Ascending aorta (tissue), 2 donors: ENCODE measurements at regions of chr16 and their contacts with region 1.

Region 1: DNA sequence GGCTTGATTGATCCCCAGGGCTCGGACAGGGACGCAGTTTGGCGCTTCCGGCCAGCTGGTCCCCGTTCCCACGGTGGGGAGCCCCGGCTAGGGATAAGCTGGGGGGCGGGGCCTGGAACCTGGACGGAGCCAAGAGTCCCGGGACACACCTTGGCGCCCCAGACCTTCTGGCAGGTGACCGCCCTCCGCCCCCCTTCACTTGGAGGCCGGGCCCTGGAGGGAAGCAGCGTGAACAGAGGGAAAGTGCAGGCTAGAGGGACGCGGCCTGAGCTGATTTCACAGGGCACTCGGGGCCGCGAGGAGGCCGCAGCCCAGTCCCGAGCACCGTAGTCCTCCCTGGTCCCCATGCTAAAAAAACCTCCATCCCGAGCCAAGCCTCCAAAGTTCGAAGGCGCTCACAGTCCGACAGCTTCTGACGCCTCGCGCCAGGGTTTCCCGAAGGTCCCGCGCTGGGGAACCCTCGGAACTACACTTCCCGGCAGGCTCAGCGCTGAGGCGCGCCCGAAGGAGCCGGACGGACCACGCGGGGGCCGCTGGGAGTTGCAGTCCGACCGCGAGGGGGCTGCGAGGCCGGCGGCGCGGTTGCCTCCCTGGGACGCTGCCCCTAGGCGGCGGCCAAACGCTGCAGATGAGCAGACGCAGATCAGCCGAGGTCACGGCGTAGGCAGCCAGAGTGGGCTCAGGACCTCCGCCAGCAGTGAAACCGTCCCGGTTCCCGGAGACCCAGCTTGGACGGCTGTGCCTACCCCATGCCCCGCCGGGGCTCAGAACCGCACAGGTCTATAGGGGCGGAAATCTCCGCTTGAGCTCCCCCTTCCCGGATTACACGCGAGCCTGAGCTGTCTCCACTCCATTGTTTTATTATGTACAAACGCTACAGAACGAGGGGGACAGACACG is at the start of gene TBX6:
- DNase-seq: peak; percentile 65 to 95
- H3K4me3 ChIP-seq: peak within 1 kb of the TSS; percentile 53 to 72
- H3K27ac ChIP-seq: peak within 1 kb of the TSS; percentile 74 to 84
- H3K4me1 ChIP-seq: peaks cover 22 to 27% of the 10 kb centered on the region in 2 donors
- H3K27me3 ChIP-seq: no peaks in the 10 kb centered on the region
- CTCF ChIP-seq: peak; percentile 75 to 96 (median 81)
- total RNA-seq, gene TBX6: 0.75 TPM

Region 2: GRCh38 chr16:30052671-30053372 is 38.9 kb before region 1 on chr16:
- intact Hi-C with region 1: loop called (anchors 5 kb)
- DNase-seq: peak in 1 of 2 donors; percentile 94
- H3K4me3 ChIP-seq: peak overlapping the region; percentile 79 to 88
- H3K27ac ChIP-seq: peak overlapping the region; percentile 41 to 59
- H3K4me1 ChIP-seq: peaks cover 0 to 12% of the 10 kb centered on the region in 2 donors
- H3K27me3 ChIP-seq: no peaks in the 10 kb centered on the region
- CTCF ChIP-seq: no peak

Region 3: DNA sequence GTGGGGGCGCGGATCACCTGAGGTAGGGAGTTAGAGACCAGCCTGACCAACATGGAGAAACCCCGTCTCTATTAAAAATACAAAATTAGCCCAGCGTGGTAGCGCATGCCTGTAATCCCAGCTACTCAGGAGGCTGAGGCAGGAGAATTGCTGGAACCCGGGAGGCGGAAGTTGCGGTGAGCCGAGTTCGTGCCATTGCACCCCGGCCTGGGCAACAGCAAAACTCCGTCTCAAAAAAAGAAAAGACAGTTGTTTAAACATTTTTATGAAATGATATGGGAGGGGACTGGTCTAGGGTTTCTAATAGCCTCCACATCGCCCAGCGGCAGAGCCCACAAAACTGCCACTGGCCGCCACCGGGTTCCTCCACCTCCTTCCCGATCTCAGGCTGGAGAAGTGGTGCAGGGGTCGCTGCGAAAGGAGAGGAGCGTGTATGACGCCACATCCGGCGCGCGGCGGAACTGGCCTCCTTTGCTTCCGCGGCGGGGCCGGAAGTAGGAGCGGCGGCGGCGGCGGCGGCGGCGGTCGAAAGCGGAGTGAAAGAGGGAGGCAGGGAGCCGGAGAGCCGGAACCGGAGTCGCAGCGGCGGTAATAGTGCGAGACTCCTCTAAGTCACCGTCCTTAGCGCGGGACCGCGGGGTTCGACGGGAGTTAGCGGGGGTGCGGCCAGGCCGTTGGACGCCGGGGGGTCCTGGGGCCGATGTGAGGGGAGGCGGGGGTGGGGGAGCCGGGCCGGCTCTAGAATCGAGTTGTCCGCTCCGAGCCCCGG is 16.0 kb before region 1 on chr16 and contains the start of gene PPP4C:
- intact Hi-C with region 1: loop called (anchors 2 kb)
- DNase-seq: peak; percentile 46 to 95
- H3K4me3 ChIP-seq: peak within 1 kb of the TSS; percentile 69 to 96
- H3K27ac ChIP-seq: peak within 1 kb of the TSS; percentile 92 to 93
- H3K4me1 ChIP-seq: peaks cover 6 to 19% of the 10 kb centered on the region in 2 donors
- H3K27me3 ChIP-seq: no peaks in the 10 kb centered on the region
- CTCF ChIP-seq: peak in 1 of 3 experiments; percentile 17
- total RNA-seq, gene PPP4C: 50.7 TPM

Region 4: GRCh38 chr16:30122604-30123160 is 31.0 kb after region 1 on chr16:
- intact Hi-C with region 1: loop called (anchors 1 kb)
- DNase-seq: peak in 1 of 2 donors; percentile 72
- H3K4me3 ChIP-seq: peak overlapping the region; percentile 88 to 99
- H3K27ac ChIP-seq: peak overlapping the region; percentile 86 to 92
- H3K4me1 ChIP-seq: peaks cover 0 to 9% of the 10 kb centered on the region in 2 donors
- H3K27me3 ChIP-seq: no peaks in the 10 kb centered on the region
- CTCF ChIP-seq: no peak

Region 5: GRCh38 chr16:30183233-30184095 is 91.7 kb after region 1 on chr16 and contains the start of gene CORO1A:
- intact Hi-C with region 1: loop called (anchors 5 kb)
- DNase-seq: peak in 1 of 2 donors; percentile 88
- H3K4me3 ChIP-seq: peak within 1 kb of the TSS; percentile 59 to 73
- H3K27ac ChIP-seq: peak within 1 kb of the TSS; percentile 68 to 72
- H3K4me1 ChIP-seq: peaks cover 3 to 9% of the 10 kb centered on the region in 2 donors
- H3K27me3 ChIP-seq: no peaks in the 10 kb centered on the region
- CTCF ChIP-seq: no peak
- total RNA-seq, gene CORO1A: 69.4 TPM

Region 6: DNA sequence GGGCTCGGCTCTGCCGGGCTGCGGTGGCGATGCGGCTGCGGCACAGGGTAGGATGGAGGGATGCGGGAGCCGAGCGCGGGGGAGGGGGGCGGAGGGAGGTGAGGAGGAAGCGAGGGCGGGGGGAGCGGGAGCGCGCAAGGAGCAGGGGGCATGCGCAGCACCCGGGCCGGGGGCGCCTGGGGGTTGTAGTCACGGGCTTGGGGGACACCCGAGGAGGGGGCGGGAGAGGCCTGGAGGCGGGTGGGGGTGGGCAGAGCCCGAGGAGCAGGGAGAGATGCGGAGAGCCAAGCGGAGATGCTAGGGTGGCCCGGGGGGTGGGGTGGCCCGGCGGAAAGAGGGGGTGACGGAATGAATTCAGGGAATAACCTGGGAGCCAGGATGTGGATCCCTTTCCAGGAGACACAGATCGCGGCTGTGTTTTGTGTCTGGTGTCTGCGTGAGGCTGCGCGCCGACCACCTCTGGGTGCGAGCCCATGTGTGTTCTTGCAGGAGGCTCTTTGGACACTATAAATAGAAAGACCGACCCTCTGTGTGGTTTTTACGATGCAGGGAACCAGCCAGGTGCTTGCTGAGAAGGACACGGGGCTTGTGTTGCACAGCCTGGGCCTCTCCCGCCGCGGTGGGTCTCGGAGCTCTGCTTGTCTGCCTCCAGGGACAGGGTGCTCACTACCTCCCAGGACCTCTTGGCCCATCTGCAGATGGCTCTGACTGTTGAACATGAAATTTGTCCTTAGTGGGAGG is 919.0 kb after region 1 on chr16 and contains the start of gene STX1B:
- intact Hi-C with region 1: no loop called
- DNase-seq: no peak
- H3K4me3 ChIP-seq: peak within 1 kb of the TSS in 1 of 2 donors; percentile 30
- H3K27ac ChIP-seq: no peak within 1 kb of the TSS
- H3K4me1 ChIP-seq: no peaks in the 10 kb centered on the region
- H3K27me3 ChIP-seq: peaks cover 5% of the 10 kb centered on the region
- CTCF ChIP-seq: no peak
- total RNA-seq, gene STX1B: 2.0 TPM

Region 7: GRCh38 chr16:31253642-31254045 is 1161.9 kb after region 1 on chr16:
- intact Hi-C with region 1: no loop called
- DNase-seq: peak; percentile 16 to 71
- H3K4me3 ChIP-seq: no peak overlapping the region
- H3K27ac ChIP-seq: no peak overlapping the region
- H3K4me1 ChIP-seq: no peaks in the 10 kb centered on the region
- H3K27me3 ChIP-seq: no peaks in the 10 kb centered on the region
- CTCF ChIP-seq: no peak